Esophagus muscularis mucosa (tissue), 4 donors: ENCODE measurements at regions of chr1 and their contacts with region 1.

Region 1: DNA sequence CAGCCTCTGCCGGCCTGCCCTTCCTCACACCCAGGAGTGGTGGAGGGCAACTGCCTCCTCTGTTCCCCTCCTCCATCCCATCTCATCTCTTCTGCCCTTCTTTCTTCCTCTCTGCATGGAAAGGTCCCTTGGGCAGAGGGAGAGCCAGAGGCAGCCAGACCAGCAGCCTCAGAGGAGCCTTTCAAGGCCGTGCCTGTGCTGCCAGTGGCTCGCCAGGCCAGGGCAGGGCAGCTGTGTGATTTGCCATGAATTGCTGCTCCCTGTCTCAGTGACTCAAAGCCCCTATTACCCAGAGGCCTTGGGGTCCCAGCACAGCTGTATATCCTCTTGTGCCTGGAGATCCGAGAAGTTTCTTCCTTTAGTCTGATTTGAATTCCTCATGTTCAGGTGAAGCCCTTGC is 21.9 kb downstream of the TMCC2 start:
- DNase-seq: no peak
- H3K4me3 ChIP-seq: no peak overlapping the region
- H3K27ac ChIP-seq: peak overlapping the region; percentile 28 to 65 (median 58)
- H3K4me1 ChIP-seq: peaks cover 28 to 62% (median 61%) of the 10 kb centered on the region in 4 donors
- H3K27me3 ChIP-seq: no peaks in the 10 kb centered on the region
- CTCF ChIP-seq: no peak
- EP300 ChIP-seq: no peak
- POLR2A ChIP-seq: no peak

Region 2: DNA sequence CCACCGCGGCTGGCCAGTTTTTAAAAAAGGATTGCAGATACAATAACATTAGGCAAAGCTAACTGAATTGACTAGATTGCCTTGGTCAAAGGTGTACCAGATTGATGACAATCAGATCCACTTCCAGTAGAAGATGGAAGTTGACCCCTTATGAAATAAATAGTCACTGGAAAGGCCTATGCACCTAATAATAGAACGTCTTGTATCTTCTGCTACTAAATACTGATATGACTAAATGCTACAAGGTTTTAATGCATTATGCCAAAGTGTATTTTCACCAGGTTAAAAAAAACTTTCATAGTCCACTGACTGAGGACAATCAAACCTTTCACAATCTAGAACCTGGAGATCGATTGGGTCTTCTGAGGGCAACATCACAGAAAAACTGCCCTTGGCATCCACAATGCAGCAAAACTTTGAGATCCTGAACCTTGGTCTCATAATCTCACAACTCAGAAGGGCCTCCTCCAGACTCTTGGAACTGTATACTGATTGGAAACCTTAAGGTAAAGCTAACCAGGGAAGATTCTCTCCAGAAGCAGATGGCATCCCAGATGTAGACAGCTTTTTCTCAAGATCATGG is 120.1 kb before region 1 on chr1:
- intact Hi-C with region 1: loop called (anchors 5 kb)
- DNase-seq: no peak
- H3K4me3 ChIP-seq: no peak overlapping the region
- H3K27ac ChIP-seq: no peak overlapping the region
- H3K4me1 ChIP-seq: no peaks in the 10 kb centered on the region
- H3K27me3 ChIP-seq: no peaks in the 10 kb centered on the region
- CTCF ChIP-seq: no peak
- EP300 ChIP-seq: no peak
- POLR2A ChIP-seq: no peak

Region 3: DNA sequence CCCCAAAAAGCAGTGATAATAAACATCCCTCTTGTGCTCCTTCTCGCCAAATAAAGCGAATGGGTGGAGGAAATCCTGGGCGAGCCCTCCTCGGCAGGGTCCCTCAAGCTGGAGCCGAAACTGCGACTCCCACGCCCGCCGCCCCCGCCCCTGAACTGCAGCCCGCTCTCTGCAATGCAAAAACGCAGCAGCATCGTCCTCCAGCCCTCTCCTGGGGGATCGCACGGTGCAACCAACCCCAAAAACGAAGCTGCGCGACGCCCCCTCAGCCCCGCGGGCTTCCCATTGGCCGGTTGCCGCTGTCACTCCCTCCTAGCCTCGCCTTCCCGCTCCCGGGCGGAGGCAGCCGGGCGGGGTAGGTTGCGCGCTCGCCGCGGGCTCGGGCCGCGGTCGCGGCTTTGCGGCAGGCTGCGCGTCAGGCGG is 22.1 kb before region 1 on chr1 and contains the start of gene TMCC2:
- intact Hi-C with region 1: loop called (anchors 2 kb)
- DNase-seq: peak; percentile 92
- H3K4me3 ChIP-seq: peak within 1 kb of the TSS; percentile 60 to 81 (median 65)
- H3K27ac ChIP-seq: peak within 1 kb of the TSS; percentile 17 to 64 (median 42)
- H3K4me1 ChIP-seq: peaks cover 19 to 40% (median 35%) of the 10 kb centered on the region in 4 donors
- H3K27me3 ChIP-seq: no peaks in the 10 kb centered on the region
- CTCF ChIP-seq: no peak
- EP300 ChIP-seq: no peak
- POLR2A ChIP-seq: no peak
- total RNA-seq, gene TMCC2: 4.1 to 8.2 (median 5.9) TPM

Region 4: DNA sequence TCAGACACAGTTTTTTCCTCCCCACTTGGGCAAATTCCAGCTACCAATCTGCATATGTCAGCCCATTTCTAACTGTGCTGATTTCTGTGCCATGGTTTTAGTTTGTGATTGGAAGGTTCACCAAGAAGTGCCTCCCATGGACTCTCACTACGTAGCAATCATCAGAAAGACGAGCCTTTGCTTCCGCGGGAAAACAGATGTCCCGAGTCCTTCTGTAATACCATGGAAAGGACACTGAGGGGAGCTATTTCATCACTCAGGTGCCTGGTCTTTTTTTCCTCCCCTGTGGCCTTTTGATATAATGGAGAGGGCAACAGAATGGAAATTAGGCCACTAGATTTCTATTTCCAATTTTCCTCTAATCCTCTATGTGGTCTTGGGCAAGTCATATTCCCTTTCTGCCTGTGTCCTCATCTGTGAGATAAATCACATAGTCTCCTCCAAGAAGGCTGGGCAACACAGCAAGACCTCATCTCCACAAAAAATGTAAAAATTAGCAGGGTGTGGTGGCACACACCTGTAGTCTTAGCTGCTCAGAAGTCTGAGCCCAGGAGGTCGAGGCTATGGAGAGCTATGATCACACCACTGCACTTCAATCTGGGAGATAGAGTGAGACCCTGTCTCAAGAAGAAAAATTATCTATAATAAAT is 147.4 kb after region 1 on chr1:
- intact Hi-C with region 1: no loop called
- DNase-seq: peak; percentile 83
- H3K4me3 ChIP-seq: no peak overlapping the region
- H3K27ac ChIP-seq: no peak overlapping the region
- H3K4me1 ChIP-seq: peaks cover 0 to 5% (median 0%) of the 10 kb centered on the region in 4 donors
- H3K27me3 ChIP-seq: peaks cover 0 to 11% (median 0%) of the 10 kb centered on the region in 4 donors
- CTCF ChIP-seq: peak; percentile 52 to 64 (median 62)
- EP300 ChIP-seq: no peak
- POLR2A ChIP-seq: no peak